ENCODE measurements at regions of chr21 and their contacts with region 1.

Region 1: DNA sequence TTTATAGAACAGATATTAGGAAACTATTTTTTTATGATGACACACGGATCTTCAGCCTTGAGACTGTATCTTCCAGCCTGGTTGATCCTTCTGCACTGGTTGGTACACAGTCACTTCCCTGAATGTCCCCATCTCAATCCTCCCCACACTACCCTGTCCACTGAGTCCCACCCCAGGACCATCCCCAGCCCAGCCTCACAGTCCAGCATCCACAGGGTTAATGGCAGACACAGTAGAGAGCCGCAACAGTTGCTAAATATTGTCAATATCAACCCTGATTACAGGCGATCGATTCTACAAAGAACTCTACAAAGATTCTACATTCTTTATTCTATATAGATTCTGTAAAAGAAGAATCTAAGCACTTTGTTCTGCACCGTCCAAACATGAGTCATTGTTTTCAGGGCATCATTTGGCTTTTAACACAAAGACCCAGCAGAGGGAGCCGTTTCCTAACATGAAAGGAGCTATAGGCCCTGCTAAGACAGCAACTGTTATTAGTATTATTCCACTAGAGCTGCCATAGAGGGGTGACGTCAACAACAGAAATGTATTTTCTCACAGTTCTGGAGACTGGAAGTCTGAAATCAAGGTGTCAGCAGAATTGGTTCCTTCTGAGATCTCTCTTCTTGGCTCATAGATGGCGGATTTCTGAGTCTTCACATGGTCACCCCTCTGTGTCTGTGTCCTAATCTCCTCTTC is 30.1 kb upstream of the IFNAR2 start:
- DNase-seq: peak; percentile 79 to 82
- H3K4me3 ChIP-seq: no peak overlapping the region
- H3K27ac ChIP-seq: no peak overlapping the region
- H3K4me1 ChIP-seq: peaks cover 0 to 25% of the 10 kb centered on the region in 2 donors
- H3K27me3 ChIP-seq: no peaks in the 10 kb centered on the region
- CTCF ChIP-seq: peak; percentile 44 to 93 (median 84)
- POLR2A ChIP-seq: no peak

Region 2: DNA sequence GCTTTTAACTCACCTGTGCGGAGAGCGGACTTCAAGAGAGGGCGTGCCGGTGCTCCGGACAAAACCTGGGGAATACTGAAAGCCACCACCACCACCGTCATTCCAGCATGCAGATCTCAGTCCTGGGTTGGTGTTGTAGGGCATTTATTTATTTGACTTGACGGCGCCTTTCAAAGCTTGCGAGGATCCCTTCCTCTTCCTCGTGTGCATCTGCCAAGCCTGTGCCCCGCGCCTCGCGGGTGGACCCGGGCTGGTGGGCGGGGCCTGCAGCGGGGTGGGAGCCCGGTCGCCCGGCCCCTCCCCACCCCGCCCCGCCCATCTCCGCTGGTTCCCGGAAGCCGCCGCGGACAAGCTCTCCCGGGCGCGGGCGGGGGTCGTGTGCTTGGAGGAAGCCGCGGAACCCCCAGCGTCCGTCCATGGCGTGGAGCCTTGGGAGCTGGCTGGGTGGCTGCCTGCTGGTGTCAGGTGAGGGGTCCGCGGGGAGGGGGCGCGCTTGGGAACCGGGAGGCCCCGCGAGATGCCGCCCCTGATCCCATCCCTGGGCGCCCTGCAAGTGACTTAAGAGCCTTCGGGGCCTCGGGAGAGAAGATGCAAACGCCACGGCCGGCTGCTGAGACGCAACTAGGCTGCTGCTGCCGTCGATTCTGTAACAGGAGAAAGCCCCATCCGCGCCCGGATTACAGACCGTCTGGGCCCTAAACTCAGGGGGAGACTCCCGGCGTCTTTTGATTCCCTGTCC is 66.6 kb after region 1 on chr21 and contains the start of gene IL10RB:
- intact Hi-C with region 1: loop called (anchors 10 kb)
- DNase-seq: peak; percentile 72 to 74
- H3K4me3 ChIP-seq: peak within 1 kb of the TSS; percentile 54 to 91 (median 57)
- H3K27ac ChIP-seq: peak within 1 kb of the TSS; percentile 47 to 80 (median 79)
- H3K4me1 ChIP-seq: peaks cover 4 to 6% of the 10 kb centered on the region in 2 donors
- H3K27me3 ChIP-seq: no peaks in the 10 kb centered on the region
- CTCF ChIP-seq: no peak
- POLR2A ChIP-seq: peak; percentile 27 to 63
- total RNA-seq, gene IL10RB: 20.5 to 53.1 (median 21.4) TPM

Region 3: DNA sequence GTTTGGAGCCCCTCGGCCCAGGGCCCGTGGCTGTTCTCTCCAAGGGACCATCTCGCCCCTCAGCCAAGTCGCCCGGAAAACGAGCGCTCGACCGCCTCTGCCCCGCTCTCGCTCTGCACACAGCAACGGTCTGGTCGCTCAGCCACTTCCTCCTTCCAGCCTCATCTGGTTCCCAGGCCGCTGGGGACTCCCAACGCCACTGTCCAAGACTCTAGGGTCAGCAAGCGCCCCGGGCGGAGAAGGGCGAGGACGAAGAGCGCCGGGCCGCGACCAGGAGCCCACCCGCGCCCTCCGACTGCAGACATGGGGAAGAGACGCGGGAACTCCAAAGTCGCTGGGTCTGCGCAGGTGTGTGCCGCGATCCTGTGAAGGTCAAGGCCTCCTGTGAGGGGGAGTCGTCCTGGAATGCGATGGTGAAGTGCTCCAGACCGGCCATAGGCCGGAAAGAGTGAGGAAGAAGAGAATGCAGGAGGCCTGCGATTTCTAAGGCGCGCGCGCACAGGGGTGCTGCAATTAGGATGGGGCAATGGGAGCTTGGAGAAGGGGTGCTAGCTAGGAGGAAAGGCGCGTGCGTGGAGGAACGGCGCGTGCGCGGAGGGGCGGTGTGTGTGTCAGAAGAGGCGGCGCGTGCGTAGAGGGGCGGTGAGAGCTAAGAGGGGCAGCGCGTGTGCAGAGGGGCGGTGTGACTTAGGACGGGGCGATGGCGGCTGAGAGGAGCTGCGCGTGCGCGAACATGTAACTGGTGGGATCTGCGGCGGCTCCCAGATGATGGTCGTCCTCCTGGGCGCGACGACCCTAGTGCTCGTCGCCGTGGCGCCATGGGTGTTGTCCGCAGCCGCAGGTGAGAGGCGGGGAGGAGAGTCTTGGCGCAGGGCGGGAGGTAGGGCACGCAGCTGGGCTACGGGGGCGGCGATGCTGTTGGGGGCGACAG is 124.9 kb after region 1 on chr21 and contains the start of gene IFNAR1:
- intact Hi-C with region 1: no loop called
- DNase-seq: peak; percentile 99
- H3K4me3 ChIP-seq: peak within 1 kb of the TSS; percentile 93 to 98 (median 93)
- H3K27ac ChIP-seq: peak within 1 kb of the TSS; percentile 96 to 98 (median 98)
- H3K4me1 ChIP-seq: peaks cover 22 to 29% of the 10 kb centered on the region in 2 donors
- H3K27me3 ChIP-seq: no peaks in the 10 kb centered on the region
- CTCF ChIP-seq: peak in 2 of 6 experiments; percentile 2 to 3
- POLR2A ChIP-seq: peak; percentile 74 to 96
- total RNA-seq, gene IFNAR1: 37.0 to 51.2 (median 42.4) TPM

Region 4: GRCh38 chr21:33449616-33450015 is 249.9 kb after region 1 on chr21:
- intact Hi-C with region 1: loop called (anchors 5 kb)
- DNase-seq: no peak
- H3K4me3 ChIP-seq: no peak overlapping the region
- H3K27ac ChIP-seq: no peak overlapping the region
- H3K4me1 ChIP-seq: peaks cover 6 to 31% of the 10 kb centered on the region in 2 donors
- H3K27me3 ChIP-seq: no peaks in the 10 kb centered on the region
- CTCF ChIP-seq: no peak
- POLR2A ChIP-seq: no peak